ENCODE measurements at regions of chr17 and their contacts with region 1.

Region 1: GRCh38 chr17:74987418-74987908 is at the start of gene CDR2L:
- DNase-seq: peak; percentile 96 to 99
- ATAC-seq: peak; percentile 97
- total RNA-seq, gene CDR2L: 3.1 to 3.2 TPM

Region 2: GRCh38 chr17:74923533-74924249 is 63.8 kb before region 1 on chr17:
- intact Hi-C with region 1: no loop called
- DNase-seq: peak; percentile 41 to 84
- ATAC-seq: peak; percentile 82

Region 3: GRCh38 chr17:75034236-75034908 is 46.9 kb after region 1 on chr17:
- intact Hi-C with region 1: loop called in 1 of 2 experiments (anchors 10 kb)
- DNase-seq: peak; percentile 84 to 85
- ATAC-seq: peak; percentile 62

Measured in left colon (tissue), 2 donors.